ENCODE measurements at regions of chr2 and their contacts with region 1.

Region 1: DNA sequence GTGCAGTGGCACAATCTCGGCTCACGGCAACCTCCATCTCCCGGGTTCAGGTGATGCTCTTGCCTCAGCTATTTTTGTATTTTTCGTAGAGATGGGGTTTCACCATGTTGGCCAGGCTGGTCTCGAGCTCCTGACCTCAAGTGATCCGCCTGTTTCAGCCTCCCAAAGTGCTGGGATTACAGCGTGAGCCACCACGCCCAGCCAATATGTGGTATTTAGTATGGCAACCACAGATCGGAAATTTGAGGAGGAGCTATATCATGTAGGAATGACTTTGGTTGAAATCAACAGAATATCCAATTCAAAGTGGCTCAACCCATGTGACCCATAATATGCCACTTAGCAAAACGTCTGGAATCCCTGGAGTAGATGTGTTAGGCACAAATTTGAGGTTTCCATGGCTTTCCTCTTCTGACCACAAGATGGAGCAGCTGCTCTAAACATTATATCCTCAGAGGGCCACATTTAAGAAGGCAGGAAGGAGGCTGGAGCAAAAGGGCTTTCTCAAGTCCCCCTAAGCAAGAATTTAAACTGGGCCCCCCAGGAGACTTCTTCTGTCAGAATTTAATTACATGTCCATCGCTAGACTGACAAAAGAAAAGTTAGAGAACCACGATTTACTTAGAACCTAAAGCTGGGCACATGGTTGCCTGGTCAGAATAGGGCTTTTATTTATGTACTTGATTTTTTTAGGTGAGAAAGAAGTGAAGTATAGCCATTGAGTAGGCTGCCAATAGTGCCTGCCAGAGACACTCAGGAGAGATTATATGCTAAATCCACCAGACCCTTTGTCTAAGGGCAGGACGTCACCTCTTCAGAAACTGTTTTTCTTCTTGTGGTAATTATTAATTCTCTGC is 49.6 kb upstream of the ITSN2 start:
- DNase-seq: peak; percentile 81 to 83
- ATAC-seq: peak; percentile 96 to 97
- H3K4me3 ChIP-seq: no peak overlapping the region
- H3K27ac ChIP-seq: no peak overlapping the region
- H3K4me1 ChIP-seq: peaks cover 10% of the 10 kb centered on the region; the same call in 1 of the 3 replicates
- CTCF ChIP-seq: peak; percentile 98
- EP300 ChIP-seq: no peak
- POLR2A ChIP-seq: no peak
- RAD21 ChIP-seq: peak; percentile 97

Region 2: GRCh38 chr2:24392542-24393059 is 17.3 kb before region 1 on chr2:
- CTCF ChIA-PET with region 1: interaction called, 44 read pairs
- POLR2A ChIA-PET with region 1: no interaction called
- DNase-seq: no peak
- ATAC-seq: peak in 1 of 2 experiments; percentile 55; a peak in 2 of 6 replicates
- H3K4me3 ChIP-seq: no peak overlapping the region
- H3K27ac ChIP-seq: no peak overlapping the region
- H3K4me1 ChIP-seq: no peaks in the 10 kb centered on the region
- CTCF ChIP-seq: no peak
- EP300 ChIP-seq: no peak
- POLR2A ChIP-seq: no peak
- RAD21 ChIP-seq: no peak

Region 3: DNA sequence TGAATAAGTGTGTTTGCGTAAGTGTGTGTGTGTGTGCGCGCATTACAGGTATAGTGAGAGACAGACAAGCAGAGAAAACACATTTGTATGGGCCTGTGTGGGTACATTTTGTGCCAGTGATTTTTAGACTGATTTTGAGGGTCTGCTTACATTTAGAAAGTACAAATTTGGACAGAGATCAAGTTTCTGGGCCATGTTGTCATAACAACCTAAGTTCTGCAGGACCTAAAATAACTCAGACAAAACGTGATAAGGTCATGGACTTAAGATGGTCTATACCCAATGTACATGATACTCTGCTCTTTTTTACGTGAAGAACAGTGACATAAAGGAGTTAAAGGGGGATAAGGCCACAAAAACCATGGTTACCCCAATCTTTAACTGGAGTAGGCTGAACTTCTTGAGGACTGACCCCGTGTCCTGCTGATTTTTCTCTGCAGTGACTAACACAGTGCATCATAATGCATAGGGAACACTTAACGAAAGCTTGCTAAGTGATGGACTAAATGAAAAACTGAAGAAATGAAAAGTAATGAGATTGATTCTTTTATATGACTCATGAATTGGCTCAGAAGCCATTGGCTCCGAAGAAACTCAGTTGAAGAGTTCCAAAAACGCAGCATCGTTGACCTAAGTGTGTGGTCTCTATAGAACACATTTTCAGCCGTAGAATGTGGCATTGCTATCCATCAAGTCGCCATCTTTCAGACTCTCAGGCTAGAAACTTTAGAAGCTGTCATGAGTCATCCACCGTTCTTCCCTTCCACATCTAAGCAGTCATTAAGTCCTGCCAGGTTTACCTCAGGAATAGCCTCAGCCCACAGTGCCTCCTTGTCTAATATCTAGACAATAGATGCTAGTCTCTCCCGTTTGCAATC is 19.5 kb after region 1 on chr2:
- CTCF ChIA-PET with region 1: interaction called, 37 read pairs
- POLR2A ChIA-PET with region 1: no interaction called
- DNase-seq: no peak
- ATAC-seq: no peak; a peak in 1 of 6 replicates
- H3K4me3 ChIP-seq: no peak overlapping the region
- H3K27ac ChIP-seq: no peak overlapping the region
- H3K4me1 ChIP-seq: no peaks in the 10 kb centered on the region
- CTCF ChIP-seq: no peak
- EP300 ChIP-seq: no peak
- POLR2A ChIP-seq: no peak
- RAD21 ChIP-seq: no peak

Region 4: GRCh38 chr2:24505534-24506275 is 95.8 kb after region 1 on chr2:
- CTCF ChIA-PET with region 1: interaction called, 12 read pairs
- POLR2A ChIA-PET with region 1: no interaction called
- DNase-seq: no peak
- ATAC-seq: no peak
- H3K4me3 ChIP-seq: no peak overlapping the region
- H3K27ac ChIP-seq: no peak overlapping the region
- H3K4me1 ChIP-seq: 0 out of 3 replicates have a peak, but pooled peaks cover 3% of the 10 kb centered on the region
- CTCF ChIP-seq: no peak
- EP300 ChIP-seq: no peak
- POLR2A ChIP-seq: no peak
- RAD21 ChIP-seq: no peak

Region 5: DNA sequence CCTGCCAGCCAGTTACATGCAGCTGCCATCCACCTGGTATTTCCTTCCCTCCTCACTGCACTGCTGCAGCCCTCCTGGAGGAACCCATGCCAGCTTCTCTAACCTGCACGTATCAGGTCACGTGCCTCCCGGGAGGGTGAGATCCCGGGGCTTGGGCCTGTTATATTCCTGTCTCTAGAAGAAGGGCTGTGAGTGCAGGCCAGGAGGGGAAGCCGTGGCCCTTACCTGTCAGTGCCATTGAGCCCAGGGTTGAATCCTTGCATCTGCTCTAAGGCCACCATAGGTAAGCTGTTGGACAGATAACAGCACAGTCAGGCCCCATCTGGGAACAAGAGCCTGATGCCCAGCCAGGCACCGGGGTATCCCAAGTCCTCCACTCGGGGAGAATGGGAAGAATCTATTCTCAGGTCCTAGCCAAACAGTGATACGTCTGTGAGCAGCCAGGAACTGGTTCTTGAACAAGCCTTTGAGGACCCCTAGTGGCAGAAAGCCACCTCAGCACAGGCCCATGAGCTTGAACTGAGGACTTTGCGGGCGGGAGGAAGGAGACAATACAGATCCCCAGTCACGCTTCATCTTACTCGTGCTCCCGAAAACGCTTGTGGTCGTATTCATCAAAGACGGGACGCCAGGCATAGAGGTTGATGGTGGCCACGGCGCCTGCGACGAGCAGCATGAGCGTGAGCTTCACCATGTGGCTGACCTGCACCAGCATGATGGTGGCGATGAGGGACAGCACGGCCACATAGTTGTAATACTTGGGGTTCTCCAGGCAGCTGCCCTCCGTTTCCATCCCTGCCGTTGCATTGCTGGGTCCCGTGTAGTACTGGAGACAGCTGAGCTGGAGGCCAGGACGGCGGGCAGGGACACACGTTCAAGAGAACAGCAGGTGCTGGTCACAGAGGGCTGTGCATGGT is 417.7 kb after region 1 on chr2:
- CTCF ChIA-PET with region 1: interaction called, 252 read pairs
- POLR2A ChIA-PET with region 1: no interaction called
- DNase-seq: peak; percentile 90 to 95
- ATAC-seq: peak; percentile 84 to 91
- H3K4me3 ChIP-seq: no peak overlapping the region
- H3K27ac ChIP-seq: peak overlapping the region in 1 of 2 experiments; percentile 1; a peak in 1 of 6 replicates
- H3K4me1 ChIP-seq: 0 out of 3 replicates have a peak, but pooled peaks cover 2% of the 10 kb centered on the region
- CTCF ChIP-seq: peak; percentile 93
- EP300 ChIP-seq: no peak
- POLR2A ChIP-seq: no peak
- RAD21 ChIP-seq: peak; percentile 95 to 97

Measured in A549 (cell line).